Endothelial cell of umbilical vein (primary cell): ENCODE measurements at regions of chr12 and their contacts with region 1.

Region 1: GRCh38 chr12:9750276-9751203 is 10.2 kb downstream of the CD69 start:
- DNase-seq: peak; percentile 82
- H3K4me3 ChIP-seq: peak overlapping the region in 1 of 3 experiments; percentile 39
- H3K27ac ChIP-seq: peak overlapping the region; percentile 35
- H3K4me1 ChIP-seq: peaks cover 18% of the 10 kb centered on the region
- H3K27me3 ChIP-seq: no peaks in the 10 kb centered on the region
- CTCF ChIP-seq: peak; percentile 72 to 73
- POLR2A ChIP-seq: no peak

Region 2: DNA sequence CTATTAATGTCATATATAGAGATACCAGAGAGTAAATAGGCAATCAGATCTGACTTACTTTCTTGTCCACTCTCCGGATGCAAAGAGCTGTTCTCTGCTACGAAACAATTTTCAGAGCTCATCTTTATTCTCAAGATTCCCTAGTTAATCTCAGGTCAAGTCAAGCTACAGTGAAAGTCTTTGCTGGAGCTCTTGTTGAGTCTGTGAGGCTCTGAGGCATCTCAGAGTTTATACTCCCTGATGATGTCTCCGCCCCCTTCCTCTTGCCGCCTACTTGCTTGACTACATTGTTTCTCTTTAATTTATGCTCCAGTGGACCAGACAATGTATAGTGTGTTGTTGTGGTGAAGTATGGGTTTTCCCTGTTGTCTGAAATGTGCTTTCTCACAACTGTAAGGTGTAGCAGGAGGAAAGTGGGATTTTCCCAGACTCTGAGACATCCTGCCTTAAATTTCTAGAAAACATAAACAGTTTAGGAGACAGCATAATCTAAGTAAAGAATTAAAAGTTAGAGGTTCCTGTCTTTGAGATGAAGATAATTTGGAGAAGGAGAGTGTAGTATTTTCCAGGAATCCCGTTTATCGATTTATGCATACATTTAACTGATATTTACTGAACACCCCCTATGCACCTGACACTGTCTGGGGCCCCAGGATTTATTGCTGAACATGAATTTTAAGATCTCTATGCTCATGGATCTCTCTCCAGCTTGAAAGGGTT is 10.3 kb after region 1 on chr12 and contains the start of gene CD69:
- CTCF ChIA-PET with region 1: interaction called, 30 read pairs
- POLR2A ChIA-PET with region 1: no interaction called
- dilution Hi-C with region 1: no loop called
- intact Hi-C with region 1: no loop called
- DNase-seq: peak; percentile 71
- H3K4me3 ChIP-seq: peak within 1 kb of the TSS in 2 of 3 experiments; percentile 0 to 15
- H3K27ac ChIP-seq: no peak within 1 kb of the TSS
- H3K4me1 ChIP-seq: peaks cover 13% of the 10 kb centered on the region
- H3K27me3 ChIP-seq: no peaks in the 10 kb centered on the region
- CTCF ChIP-seq: no peak
- POLR2A ChIP-seq: no peak
- total RNA-seq, gene CD69: 0.49 and 1.2 TPM in 2 replicates

Region 3: DNA sequence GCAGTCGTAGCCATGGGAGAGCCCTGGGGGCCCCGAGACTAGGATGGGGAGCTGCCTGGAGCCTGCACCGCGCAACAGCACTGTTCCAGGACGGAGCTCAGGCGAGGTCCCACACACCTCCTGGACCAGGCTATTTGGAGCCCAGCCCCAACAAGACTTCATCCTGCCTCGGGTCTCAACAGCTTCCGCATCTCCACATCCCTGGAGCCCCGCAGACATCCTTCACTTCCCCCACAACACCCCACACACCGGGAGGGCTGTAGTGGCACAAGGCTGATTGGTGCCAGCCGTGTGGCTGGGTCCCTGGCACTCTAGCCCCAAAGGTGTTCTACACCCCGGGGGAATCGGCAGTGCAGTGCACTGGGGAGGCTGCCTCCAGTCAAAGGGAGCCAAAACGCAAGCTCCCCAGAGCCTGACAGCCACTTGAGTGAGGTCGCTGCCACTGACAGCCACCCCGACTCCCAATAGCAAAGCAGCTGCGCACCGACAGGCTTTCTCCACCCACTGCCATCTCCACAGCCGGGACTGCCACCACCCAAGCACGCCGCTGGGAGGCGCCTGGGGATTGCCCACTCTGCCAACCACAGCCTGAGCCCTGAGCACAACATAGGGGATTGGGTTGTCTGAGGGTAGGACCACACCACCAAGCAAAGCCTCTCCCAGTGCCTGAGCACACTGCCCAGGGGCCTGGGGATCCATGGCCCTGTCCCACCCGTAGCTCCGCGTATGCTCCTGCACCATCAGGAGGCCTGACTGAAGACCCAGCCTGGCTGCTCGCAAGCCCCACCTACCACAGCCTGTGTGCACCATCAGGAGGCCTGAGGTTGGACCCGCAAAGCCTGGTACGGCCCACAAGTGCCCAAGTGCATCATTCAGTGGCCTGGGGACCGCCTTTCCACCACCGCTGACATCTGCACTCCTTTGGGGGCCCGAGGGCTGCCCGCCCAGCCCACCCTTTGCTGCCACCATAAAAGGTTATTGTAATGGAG is 63.6 kb after region 1 on chr12:
- CTCF ChIA-PET with region 1: interaction called, 75 read pairs
- POLR2A ChIA-PET with region 1: no interaction called
- dilution Hi-C with region 1: no loop called
- intact Hi-C with region 1: loop called (anchors 1 kb)
- DNase-seq: peak; percentile 74
- H3K4me3 ChIP-seq: peak overlapping the region in 2 of 3 experiments; percentile 3 to 28
- H3K27ac ChIP-seq: no peak overlapping the region
- H3K4me1 ChIP-seq: no peaks in the 10 kb centered on the region
- H3K27me3 ChIP-seq: peaks cover 0 to 7% of the 10 kb centered on the region in 2 experiments
- CTCF ChIP-seq: peak; percentile 93 to 99
- POLR2A ChIP-seq: no peak

Region 4: DNA sequence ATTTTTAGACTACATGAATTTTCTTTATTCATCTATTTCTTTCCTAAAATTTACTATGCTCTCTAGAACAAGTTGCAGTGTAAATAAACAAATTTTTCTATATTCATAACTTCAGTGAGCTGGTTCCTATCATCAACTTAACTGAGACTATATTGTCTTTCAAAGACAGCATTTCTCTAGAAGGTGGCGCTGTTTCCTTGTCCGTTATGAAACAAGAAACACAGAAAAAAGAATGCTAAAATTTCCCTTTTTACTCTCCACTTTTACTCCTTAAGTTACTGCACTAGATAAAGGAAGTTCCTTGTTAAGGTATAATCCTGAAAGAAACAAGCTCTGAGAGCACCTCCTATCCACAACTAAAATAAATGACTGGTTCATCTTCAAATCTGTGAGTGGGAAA is 189.8 kb after region 1 on chr12:
- CTCF ChIA-PET with region 1: interaction called, 16 read pairs
- POLR2A ChIA-PET with region 1: no interaction called
- dilution Hi-C with region 1: no loop called
- intact Hi-C with region 1: no loop called
- DNase-seq: peak; percentile 37
- H3K4me3 ChIP-seq: no peak overlapping the region
- H3K27ac ChIP-seq: no peak overlapping the region
- H3K4me1 ChIP-seq: no peaks in the 10 kb centered on the region
- H3K27me3 ChIP-seq: peaks cover 5 to 11% of the 10 kb centered on the region in 2 experiments
- CTCF ChIP-seq: peak in 1 of 2 donors; percentile 38
- POLR2A ChIP-seq: no peak

Region 5: DNA sequence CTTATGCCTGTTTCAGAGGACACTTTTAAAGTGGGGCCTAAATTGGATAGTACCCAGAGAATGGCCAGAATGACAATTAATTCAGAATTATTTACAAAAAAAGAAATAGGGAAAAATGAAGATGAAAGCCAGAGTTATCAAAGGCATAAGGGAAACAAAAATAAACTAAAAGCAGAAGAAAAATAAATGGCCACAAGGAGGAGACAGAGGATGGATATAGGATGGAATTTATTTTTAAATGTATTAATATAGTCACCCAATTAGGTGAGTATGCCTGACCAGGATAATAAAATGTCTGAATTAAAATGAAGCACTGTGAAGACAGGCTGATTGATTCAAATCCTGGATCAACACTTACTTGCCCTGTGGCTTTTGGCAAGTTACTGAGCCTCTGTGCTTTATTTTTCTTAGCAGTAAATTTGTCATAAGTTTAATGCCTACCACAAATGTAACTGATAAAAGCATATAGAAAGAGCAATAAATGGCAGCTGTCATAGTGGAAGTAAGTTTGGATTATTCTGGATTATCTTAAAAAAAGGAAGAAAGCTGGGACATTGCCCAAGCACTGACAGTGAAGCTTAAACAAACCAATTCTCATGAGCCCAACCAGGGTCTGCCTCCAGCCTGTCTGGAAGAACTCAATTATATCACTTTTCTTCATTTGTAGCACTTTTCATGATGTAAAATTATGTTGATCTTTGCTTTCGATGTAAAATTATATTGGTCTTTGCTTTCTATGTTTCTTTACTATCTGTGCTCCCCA is 283.4 kb after region 1 on chr12:
- CTCF ChIA-PET with region 1: interaction called, 13 read pairs
- POLR2A ChIA-PET with region 1: no interaction called
- dilution Hi-C with region 1: no loop called
- intact Hi-C with region 1: loop called (anchors 2 kb)
- DNase-seq: peak; percentile 75
- H3K4me3 ChIP-seq: no peak overlapping the region
- H3K27ac ChIP-seq: peak overlapping the region; percentile 99
- H3K4me1 ChIP-seq: peaks cover 31% of the 10 kb centered on the region
- H3K27me3 ChIP-seq: no peaks in the 10 kb centered on the region
- CTCF ChIP-seq: peak; percentile 12 to 17
- POLR2A ChIP-seq: no peak

Region 6: GRCh38 chr12:10562306-10562933 is 811.9 kb after region 1 on chr12:
- CTCF ChIA-PET with region 1: interaction called, 12 read pairs
- POLR2A ChIA-PET with region 1: no interaction called
- dilution Hi-C with region 1: no loop called
- intact Hi-C with region 1: loop called (anchors 10 kb)
- DNase-seq: peak; percentile 72
- H3K4me3 ChIP-seq: no peak overlapping the region
- H3K27ac ChIP-seq: no peak overlapping the region
- H3K4me1 ChIP-seq: no peaks in the 10 kb centered on the region
- H3K27me3 ChIP-seq: no peaks in the 10 kb centered on the region
- CTCF ChIP-seq: peak; percentile 34 to 41
- POLR2A ChIP-seq: no peak

Region 7: GRCh38 chr12:10590966-10591365 is 840.4 kb after region 1 on chr12:
- CTCF ChIA-PET with region 1: no interaction called
- POLR2A ChIA-PET with region 1: no interaction called
- dilution Hi-C with region 1: no loop called
- intact Hi-C with region 1: no loop called
- DNase-seq: no peak
- H3K4me3 ChIP-seq: no peak overlapping the region
- H3K27ac ChIP-seq: no peak overlapping the region
- H3K4me1 ChIP-seq: no peaks in the 10 kb centered on the region
- H3K27me3 ChIP-seq: no peaks in the 10 kb centered on the region
- CTCF ChIP-seq: no peak
- POLR2A ChIP-seq: no peak